ENCODE measurements at regions of chr1 and their contacts with region 1.

Region 1: GRCh38 chr1:156500797-156501499 is 373 bp upstream of the MEF2D start:
- DNase-seq: peak; percentile 87 to 93
- H3K4me3 ChIP-seq: peak overlapping the region; percentile 100
- H3K27ac ChIP-seq: peak overlapping the region; percentile 97
- H3K4me1 ChIP-seq: peaks cover 55% of the 10 kb centered on the region
- H3K27me3 ChIP-seq: no peaks in the 10 kb centered on the region
- CTCF ChIP-seq: peak; percentile 74

Region 2: GRCh38 chr1:155648551-155649147 is 852.3 kb before region 1 on chr1:
- CTCF ChIA-PET with region 1: no interaction called
- POLR2A ChIA-PET with region 1: interaction called, 12 read pairs
- intact Hi-C with region 1: no loop called
- DNase-seq: peak; percentile 51 to 93
- H3K4me3 ChIP-seq: peak overlapping the region; percentile 58; the same call in 1 of the 2 replicates
- H3K27ac ChIP-seq: peak overlapping the region; percentile 83
- H3K4me1 ChIP-seq: peaks cover 31% of the 10 kb centered on the region
- H3K27me3 ChIP-seq: no peaks in the 10 kb centered on the region
- CTCF ChIP-seq: peak; percentile 61; the same call in 1 of the 2 replicates

Region 3: GRCh38 chr1:156282479-156283222 is 218.3 kb before region 1 on chr1 and contains the start of gene SMG5:
- CTCF ChIA-PET with region 1: interaction called, 3 read pairs
- POLR2A ChIA-PET with region 1: interaction called, 10 read pairs
- intact Hi-C with region 1: no loop called
- DNase-seq: peak; percentile 93 to 95
- H3K4me3 ChIP-seq: peak within 1 kb of the TSS; percentile 97
- H3K27ac ChIP-seq: peak within 1 kb of the TSS; percentile 85
- H3K4me1 ChIP-seq: peaks cover 30% of the 10 kb centered on the region
- H3K27me3 ChIP-seq: no peaks in the 10 kb centered on the region
- CTCF ChIP-seq: no peak
- total RNA-seq, gene SMG5: 63.3 and 66.2 TPM in 2 replicates

Region 4: GRCh38 chr1:156436142-156437036 is 64.6 kb before region 1 on chr1:
- CTCF ChIA-PET with region 1: no interaction called
- POLR2A ChIA-PET with region 1: interaction called, 11 read pairs
- intact Hi-C with region 1: no loop called
- DNase-seq: no peak
- H3K4me3 ChIP-seq: no peak overlapping the region
- H3K27ac ChIP-seq: no peak overlapping the region
- H3K4me1 ChIP-seq: no peaks in the 10 kb centered on the region
- H3K27me3 ChIP-seq: peaks cover 73% of the 10 kb centered on the region
- CTCF ChIP-seq: no peak

Region 5: DNA sequence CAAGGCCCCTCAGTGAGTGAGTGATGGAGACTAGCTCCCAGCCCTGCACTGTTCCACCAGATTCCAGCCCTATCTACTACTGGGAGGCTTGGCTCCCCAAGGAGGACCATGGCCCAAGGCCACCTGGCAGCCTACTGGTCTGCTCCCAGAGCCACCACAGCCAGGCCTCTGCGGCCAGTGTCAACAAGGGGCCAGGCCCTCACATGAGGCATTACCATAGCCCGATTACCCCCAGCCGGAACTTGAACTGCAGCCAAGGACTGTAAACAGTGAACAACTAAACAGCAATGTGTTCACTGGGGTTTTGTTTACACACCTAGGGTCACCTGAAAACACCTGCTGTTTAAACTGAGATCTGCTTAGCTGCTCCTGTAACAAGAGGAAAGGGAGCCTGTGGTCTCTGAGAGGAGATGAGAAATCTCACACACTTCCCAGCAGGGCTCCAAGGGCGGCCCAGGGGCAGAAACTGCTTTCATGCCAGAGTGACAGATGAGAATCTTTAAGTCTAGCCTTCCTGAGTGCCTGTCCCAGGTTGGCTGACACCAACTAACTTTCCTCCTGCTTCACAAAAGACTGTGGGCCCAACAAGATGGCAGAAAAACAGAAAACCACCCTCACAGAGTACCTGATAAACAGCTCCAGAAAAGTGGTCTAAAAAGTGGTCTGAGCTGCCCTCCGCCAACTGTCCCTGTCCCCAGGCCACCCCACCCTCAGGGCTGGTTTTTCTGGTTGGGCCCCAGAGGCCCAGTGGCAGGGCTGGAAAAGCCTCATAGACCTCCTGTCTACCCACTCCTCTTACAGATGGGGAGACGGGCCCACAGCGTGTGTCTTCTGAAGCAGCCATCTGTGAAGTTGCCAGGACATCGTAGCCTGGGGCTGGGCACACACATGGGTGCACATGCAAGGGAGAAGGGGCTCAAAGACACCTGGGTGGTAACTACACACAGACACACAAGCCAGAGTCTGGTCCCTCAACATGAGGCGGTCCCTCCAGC is 29.2 kb before region 1 on chr1:
- CTCF ChIA-PET with region 1: interaction called, 7 read pairs
- POLR2A ChIA-PET with region 1: interaction called, 3 read pairs
- intact Hi-C with region 1: loop called (anchors 1 kb)
- DNase-seq: peak; percentile 90 to 100
- H3K4me3 ChIP-seq: peak overlapping the region; percentile 22; the same call in 1 of the 2 replicates
- H3K27ac ChIP-seq: peak overlapping the region; percentile 87
- H3K4me1 ChIP-seq: peaks cover 48% of the 10 kb centered on the region
- H3K27me3 ChIP-seq: no peaks in the 10 kb centered on the region
- CTCF ChIP-seq: no peak

Region 6: DNA sequence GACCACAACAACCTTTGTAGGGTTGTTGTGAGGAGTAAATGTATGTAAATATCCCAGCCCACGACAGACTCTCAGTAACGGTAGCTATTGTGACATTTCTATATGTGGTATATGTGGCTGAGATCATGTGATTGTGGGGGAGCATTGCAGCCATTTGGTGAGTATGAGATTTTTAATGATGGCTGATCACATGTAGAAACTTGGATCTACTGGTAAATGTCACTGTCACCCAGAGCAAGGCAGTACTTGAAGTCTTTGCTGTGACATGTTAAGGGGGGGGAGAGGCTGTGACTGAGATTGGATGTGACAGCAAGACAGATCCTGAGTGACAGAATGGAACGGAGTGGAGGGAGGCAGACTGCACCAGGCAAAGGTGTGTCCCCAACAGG is 23.5 kb after region 1 on chr1:
- CTCF ChIA-PET with region 1: interaction called, 8 read pairs
- POLR2A ChIA-PET with region 1: interaction called, 11 read pairs
- intact Hi-C with region 1: no loop called
- DNase-seq: no peak
- H3K4me3 ChIP-seq: no peak overlapping the region
- H3K27ac ChIP-seq: no peak overlapping the region
- H3K4me1 ChIP-seq: no peaks in the 10 kb centered on the region
- H3K27me3 ChIP-seq: no peaks in the 10 kb centered on the region
- CTCF ChIP-seq: no peak

Region 7: DNA sequence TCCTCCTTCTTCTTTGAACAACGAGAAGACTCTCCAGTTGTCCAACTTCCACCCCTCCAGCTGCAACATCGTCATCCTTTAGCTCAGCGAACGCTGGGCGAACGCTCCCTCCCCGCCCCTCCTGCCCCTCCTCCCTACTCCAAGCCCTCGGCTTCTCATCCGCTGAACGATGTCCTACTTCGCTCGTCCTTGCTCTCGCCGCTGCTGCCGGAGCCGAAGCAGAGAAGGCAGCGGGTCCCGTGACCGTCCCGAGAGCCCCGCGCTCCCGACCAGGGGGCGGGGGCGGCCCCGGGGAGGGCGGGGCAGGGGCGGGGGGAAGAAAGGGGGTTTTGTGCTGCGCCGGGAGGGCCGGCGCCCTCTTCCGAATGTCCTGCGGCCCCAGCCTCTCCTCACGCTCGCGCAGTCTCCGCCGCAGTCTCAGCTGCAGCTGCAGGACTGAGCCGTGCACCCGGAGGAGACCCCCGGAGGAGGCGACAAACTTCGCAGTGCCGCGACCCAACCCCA is 140.9 kb after region 1 on chr1 and contains the start of gene BCAN:
- CTCF ChIA-PET with region 1: no interaction called
- POLR2A ChIA-PET with region 1: no interaction called
- intact Hi-C with region 1: no loop called
- DNase-seq: no peak
- H3K4me3 ChIP-seq: no peak within 1 kb of the TSS
- H3K27ac ChIP-seq: no peak within 1 kb of the TSS
- H3K4me1 ChIP-seq: peaks cover 28% of the 10 kb centered on the region
- H3K27me3 ChIP-seq: peaks cover under 1% of the 10 kb centered on the region; the same call in 1 of the 2 replicates
- CTCF ChIP-seq: no peak
- total RNA-seq, gene BCAN: not detected in 2 replicates

Region 8: DNA sequence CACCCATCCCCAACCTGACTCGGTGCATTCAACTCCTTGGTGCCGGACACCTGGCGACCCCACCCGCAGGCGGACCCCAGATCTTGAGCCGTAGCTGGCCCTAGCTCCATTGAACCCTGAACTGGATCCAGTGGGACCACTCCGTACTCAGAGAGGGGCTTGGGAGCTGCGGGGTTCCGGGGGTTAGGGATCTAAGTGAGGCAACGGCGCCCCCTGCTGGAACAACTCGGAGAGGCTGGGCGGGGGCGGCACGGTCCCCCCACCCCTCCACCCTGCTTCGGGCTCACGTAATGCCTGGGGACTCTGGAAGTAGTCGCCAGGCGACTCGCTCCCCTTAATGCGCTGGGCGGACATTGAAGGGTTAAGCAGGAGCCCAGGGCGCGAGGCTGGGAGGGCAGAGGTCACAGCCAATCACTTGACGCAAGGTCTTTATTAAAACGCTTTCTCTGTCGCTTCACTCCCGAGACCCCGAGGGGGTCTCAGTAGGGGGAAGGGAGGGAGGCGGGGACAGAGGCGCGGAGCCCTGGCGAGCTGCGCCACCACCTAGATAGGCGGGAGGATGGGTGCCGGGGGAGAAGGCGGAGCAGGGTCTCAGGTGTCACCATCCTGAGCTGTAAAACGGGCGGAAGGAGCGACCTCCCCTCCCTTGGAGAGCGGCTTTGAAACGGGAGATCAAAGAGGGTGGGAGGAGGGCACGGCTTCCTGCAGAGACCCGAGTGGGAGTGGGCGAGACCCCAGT is 205.1 kb after region 1 on chr1:
- CTCF ChIA-PET with region 1: no interaction called
- POLR2A ChIA-PET with region 1: interaction called, 15 read pairs
- intact Hi-C with region 1: no loop called
- DNase-seq: peak in 1 of 2 experiments; percentile 86
- H3K4me3 ChIP-seq: peak overlapping the region; percentile 79
- H3K27ac ChIP-seq: 0 out of 2 replicates have a peak overlapping the region, but pooled peaks have one; percentile 55
- H3K4me1 ChIP-seq: peaks cover 47% of the 10 kb centered on the region
- H3K27me3 ChIP-seq: no peaks in the 10 kb centered on the region
- CTCF ChIP-seq: peak; percentile 98